Endothelial cell of umbilical vein (primary cell): ENCODE measurements at regions of chr14 and their contacts with region 1.

Region 1: GRCh38 chr14:35121887-35122695 is at the starts of genes PPP2R3C and PRORP:
- DNase-seq: peak; percentile 95
- H3K4me3 ChIP-seq: peak within 1 kb of the TSS; percentile 81 to 96 (median 88)
- H3K27ac ChIP-seq: peak within 1 kb of the TSS; percentile 91
- H3K4me1 ChIP-seq: peaks cover 15% of the 10 kb centered on the region
- H3K27me3 ChIP-seq: no peaks in the 10 kb centered on the region
- CTCF ChIP-seq: no peak
- POLR2A ChIP-seq: no peak
- total RNA-seq, gene PPP2R3C: 40.6 and 46.0 TPM in 2 replicates
- total RNA-seq, gene PRORP: 36.3 and 36.9 TPM in 2 replicates

Region 2: GRCh38 chr14:35046048-35046741 is 75.9 kb before region 1 on chr14 and contains the start of gene FAM177A1:
- CTCF ChIA-PET with region 1: no interaction called
- POLR2A ChIA-PET with region 1: interaction called, 4 read pairs
- dilution Hi-C with region 1: no loop called
- intact Hi-C with region 1: loop called (anchors 1 kb)
- DNase-seq: peak; percentile 98
- H3K4me3 ChIP-seq: peak within 1 kb of the TSS; percentile 69 to 91 (median 74)
- H3K27ac ChIP-seq: peak within 1 kb of the TSS; percentile 94
- H3K4me1 ChIP-seq: peaks cover 21% of the 10 kb centered on the region
- H3K27me3 ChIP-seq: no peaks in the 10 kb centered on the region
- CTCF ChIP-seq: peak in 1 of 2 donors; percentile 3
- POLR2A ChIP-seq: peak; percentile 61
- total RNA-seq, gene FAM177A1: 48.2 and 64.1 TPM in 2 replicates